ENCODE measurements at regions of chr7 and their contacts with region 1.

Region 1: DNA sequence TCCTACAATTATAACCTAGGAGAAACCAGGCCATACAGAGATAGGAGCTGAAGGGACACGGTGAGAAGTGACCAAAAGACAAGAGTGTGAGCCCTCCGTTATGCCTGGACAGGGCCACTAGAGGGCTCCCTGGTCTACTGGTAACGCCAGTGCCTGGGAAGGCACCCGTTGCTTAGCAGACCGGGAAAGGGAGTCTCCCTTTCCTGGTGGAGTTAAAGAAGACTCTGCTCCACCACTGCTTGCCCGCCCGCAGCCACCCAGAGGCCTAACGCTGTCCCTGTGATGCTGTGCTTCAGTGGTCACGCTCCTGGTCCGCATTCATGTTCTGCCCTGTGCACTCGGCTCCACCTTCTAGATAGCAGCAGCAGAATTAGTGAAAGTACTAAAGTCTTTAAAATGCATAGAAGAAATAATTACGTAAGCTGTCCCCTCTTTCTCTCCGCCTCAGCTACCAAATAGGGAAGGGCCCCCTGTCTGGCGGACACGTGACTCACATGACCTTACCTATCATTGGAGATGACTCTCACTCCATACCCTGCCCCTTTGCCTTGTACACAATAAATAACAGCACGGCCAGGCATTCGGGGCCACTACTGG is 34.8 kb downstream of the GRID2IP start:
- DNase-seq: peak; percentile 89
- ATAC-seq: peak; percentile 100
- H3K4me3 ChIP-seq: peak overlapping the region; percentile 48; the same call in 1 of the 2 replicates
- H3K27ac ChIP-seq: no peak overlapping the region
- H3K4me1 ChIP-seq: no peaks in the 10 kb centered on the region
- H3K27me3 ChIP-seq: no peaks in the 10 kb centered on the region
- CTCF ChIP-seq: peak; percentile 73

Region 2: GRCh38 chr7:6536262-6537260 is 20.1 kb after region 1 on chr7:
- CTCF ChIA-PET with region 1: no interaction called
- POLR2A ChIA-PET with region 1: no interaction called
- intact Hi-C with region 1: no loop called
- DNase-seq: no peak
- ATAC-seq: peak; percentile 29; the same call in 1 of the 2 replicates
- H3K4me3 ChIP-seq: no peak overlapping the region
- H3K27ac ChIP-seq: no peak overlapping the region
- H3K4me1 ChIP-seq: no peaks in the 10 kb centered on the region
- H3K27me3 ChIP-seq: no peaks in the 10 kb centered on the region
- CTCF ChIP-seq: no peak

Region 3: DNA sequence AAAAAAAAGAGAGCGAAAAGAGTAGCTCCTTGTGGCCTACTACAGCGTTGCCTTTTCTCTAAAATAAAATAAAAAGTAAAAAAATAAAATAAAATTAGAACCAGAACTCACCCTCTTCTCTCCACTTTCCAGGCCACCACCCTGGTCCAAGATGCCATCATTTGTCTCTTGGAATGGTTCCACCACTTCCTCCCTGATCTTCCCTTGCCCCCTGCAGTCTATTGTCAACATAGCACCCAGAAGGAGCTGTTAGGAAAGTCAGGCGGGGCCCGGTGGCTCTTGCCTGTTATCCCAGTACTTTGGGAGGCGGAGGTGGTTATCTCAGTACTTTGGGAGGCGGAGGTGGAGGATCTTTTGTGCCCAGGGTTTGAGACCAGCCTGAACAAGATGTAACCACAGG is 42.4 kb after region 1 on chr7:
- CTCF ChIA-PET with region 1: interaction called, 18 read pairs
- POLR2A ChIA-PET with region 1: interaction called, 10 read pairs
- intact Hi-C with region 1: no loop called
- DNase-seq: peak; percentile 66
- ATAC-seq: peak; percentile 76
- H3K4me3 ChIP-seq: no peak overlapping the region
- H3K27ac ChIP-seq: no peak overlapping the region
- H3K4me1 ChIP-seq: no peaks in the 10 kb centered on the region
- H3K27me3 ChIP-seq: no peaks in the 10 kb centered on the region
- CTCF ChIP-seq: peak; percentile 43

Region 4: GRCh38 chr7:6577365-6578113 is 61.1 kb after region 1 on chr7 and contains the start of gene ZDHHC4:
- CTCF ChIA-PET with region 1: interaction called, 4 read pairs
- POLR2A ChIA-PET with region 1: no interaction called
- intact Hi-C with region 1: loop called (anchors 1 kb)
- DNase-seq: peak; percentile 73
- ATAC-seq: peak; percentile 90
- H3K4me3 ChIP-seq: peak within 1 kb of the TSS; percentile 70
- H3K27ac ChIP-seq: peak within 1 kb of the TSS; percentile 33
- H3K4me1 ChIP-seq: no peaks in the 10 kb centered on the region
- H3K27me3 ChIP-seq: no peaks in the 10 kb centered on the region
- CTCF ChIP-seq: no peak
- total RNA-seq, gene ZDHHC4: 28.9 and 33.9 TPM in 2 replicates

Region 5: DNA sequence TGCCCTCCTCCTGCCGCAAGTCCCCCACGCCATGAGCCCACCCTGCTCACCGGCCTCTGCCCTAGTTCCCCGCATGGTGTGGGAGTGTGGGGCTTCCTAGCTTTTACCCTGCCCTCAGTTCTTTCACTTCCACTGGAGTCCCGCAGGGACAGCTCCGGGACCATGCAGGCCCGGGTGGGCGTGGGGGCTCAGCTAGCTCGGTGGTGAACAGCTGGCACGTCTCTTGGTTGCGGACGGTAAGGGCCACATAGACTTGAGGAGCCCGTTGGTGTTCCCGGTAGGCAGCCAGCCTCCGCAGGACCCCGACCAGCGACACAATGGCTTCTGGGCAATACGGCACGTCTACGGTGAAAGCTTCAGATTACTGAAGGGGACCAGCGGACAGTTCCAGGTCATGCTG is 418.5 kb after region 1 on chr7:
- CTCF ChIA-PET with region 1: no interaction called
- POLR2A ChIA-PET with region 1: no interaction called
- intact Hi-C with region 1: loop called (anchors 10 kb)
- DNase-seq: no peak
- ATAC-seq: no peak
- H3K4me3 ChIP-seq: no peak overlapping the region
- H3K27ac ChIP-seq: no peak overlapping the region
- H3K4me1 ChIP-seq: no peaks in the 10 kb centered on the region
- H3K27me3 ChIP-seq: no peaks in the 10 kb centered on the region
- CTCF ChIP-seq: no peak